ENCODE measurements at regions of chr2 and their contacts with region 1.

Region 1: GRCh38 chr2:23824777-23825212 is 102.1 kb downstream of the ATAD2B start:
- DNase-seq: peak; percentile 60
- H3K4me3 ChIP-seq: no peak overlapping the region
- H3K27ac ChIP-seq: no peak overlapping the region
- H3K27me3 ChIP-seq: no peaks in the 10 kb centered on the region
- CTCF ChIP-seq: peak; percentile 58

Region 2: DNA sequence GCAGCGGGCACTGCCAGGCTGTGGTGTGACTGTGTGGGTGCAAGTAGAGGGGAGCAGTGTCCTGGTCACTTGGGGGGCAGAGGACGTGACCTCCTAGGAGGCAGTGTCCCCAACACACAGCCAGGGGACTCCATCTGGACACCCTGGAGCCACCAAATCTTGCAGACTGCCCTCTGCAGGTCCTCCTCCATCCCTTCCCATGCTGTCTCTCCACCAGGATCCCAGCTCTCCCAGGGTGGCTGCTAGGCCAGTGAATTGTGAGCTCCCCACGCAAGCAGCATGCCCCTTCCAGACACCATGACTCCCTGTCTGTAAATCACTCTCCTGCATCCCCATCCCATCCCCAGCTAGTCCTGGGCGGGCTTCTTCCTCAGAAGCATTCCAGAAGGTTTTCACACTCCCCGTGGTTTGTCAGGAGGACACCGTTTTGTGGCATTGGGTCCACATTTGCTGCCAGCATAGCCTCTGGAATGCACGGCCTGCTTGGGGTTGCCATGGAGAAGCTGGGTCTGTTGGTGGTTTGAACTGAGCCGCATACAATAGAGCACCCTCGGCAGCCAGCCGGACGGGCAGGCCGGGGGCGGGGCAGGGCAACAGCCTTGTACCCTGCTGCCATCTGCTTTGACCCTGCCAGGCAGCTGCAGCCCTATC is 229.1 kb before region 1 on chr2:
- in situ Hi-C with region 1: no loop called
- DNase-seq: peak; percentile 40
- H3K4me3 ChIP-seq: peak overlapping the region; percentile 17
- H3K27ac ChIP-seq: no peak overlapping the region
- H3K27me3 ChIP-seq: no peaks in the 10 kb centered on the region
- CTCF ChIP-seq: no peak

Region 3: GRCh38 chr2:23900927-23901322 is 76.1 kb after region 1 on chr2:
- in situ Hi-C with region 1: loop called (anchors 25 kb)
- DNase-seq: peak; percentile 86
- H3K4me3 ChIP-seq: no peak overlapping the region
- H3K27ac ChIP-seq: peak overlapping the region; percentile 51
- H3K27me3 ChIP-seq: no peaks in the 10 kb centered on the region
- CTCF ChIP-seq: no peak

Region 4: GRCh38 chr2:24015562-24016346 is 191.0 kb after region 1 on chr2:
- in situ Hi-C with region 1: no loop called
- DNase-seq: peak; percentile 83
- H3K4me3 ChIP-seq: no peak overlapping the region
- H3K27ac ChIP-seq: peak overlapping the region; percentile 66
- H3K27me3 ChIP-seq: no peaks in the 10 kb centered on the region
- CTCF ChIP-seq: no peak

Region 5: GRCh38 chr2:24049485-24050021 is 224.8 kb after region 1 on chr2 and contains the start of gene FKBP1B:
- in situ Hi-C with region 1: loop called (anchors 25 kb)
- DNase-seq: peak; percentile 30
- H3K4me3 ChIP-seq: peak within 1 kb of the TSS; percentile 68
- H3K27ac ChIP-seq: no peak within 1 kb of the TSS
- H3K27me3 ChIP-seq: no peaks in the 10 kb centered on the region
- CTCF ChIP-seq: no peak